Dorsolateral prefrontal cortex (tissue), 120 donors: ENCODE measurements at regions of chr19 and their contacts with region 1.

Region 1: DNA sequence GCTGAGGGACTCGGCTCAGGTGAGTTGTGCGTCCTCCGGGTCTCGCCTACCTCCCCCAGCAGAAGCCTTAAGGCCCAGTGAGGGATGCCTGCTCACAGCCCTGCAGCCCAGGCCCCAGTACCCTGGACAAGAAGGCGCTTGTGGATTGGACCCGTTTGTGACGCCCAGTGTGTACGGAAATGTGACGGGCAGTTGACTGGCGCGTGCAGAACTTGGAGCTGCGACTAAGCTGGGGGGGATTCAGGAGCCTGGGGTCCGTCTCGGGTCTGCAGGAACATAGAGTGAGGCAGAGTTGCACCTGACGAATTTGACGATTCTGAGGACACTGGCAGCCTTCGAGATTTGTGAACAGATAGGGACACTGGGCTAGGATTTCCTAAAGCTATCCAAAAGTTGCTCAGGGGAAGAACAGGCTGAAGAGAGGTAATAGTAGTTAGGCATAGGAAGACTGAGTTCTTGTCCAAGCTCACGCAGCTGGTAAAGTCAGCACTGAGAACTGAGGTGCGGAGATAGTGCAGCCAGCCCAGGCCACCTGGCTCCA is 519 bp downstream of the ZNF551 start:
- DNase-seq: no peak
- H3K4me3 ChIP-seq: peak overlapping the region; percentile 71 to 100 (median 91)
- H3K27ac ChIP-seq: peak overlapping the region in 5 of 59 donors; percentile 1 to 64 (median 35)
- H3K27me3 ChIP-seq: peaks cover 0 to under 1% (median 0%) of the 10 kb centered on the region in 45 donors
- CTCF ChIP-seq: no peak

Region 2: DNA sequence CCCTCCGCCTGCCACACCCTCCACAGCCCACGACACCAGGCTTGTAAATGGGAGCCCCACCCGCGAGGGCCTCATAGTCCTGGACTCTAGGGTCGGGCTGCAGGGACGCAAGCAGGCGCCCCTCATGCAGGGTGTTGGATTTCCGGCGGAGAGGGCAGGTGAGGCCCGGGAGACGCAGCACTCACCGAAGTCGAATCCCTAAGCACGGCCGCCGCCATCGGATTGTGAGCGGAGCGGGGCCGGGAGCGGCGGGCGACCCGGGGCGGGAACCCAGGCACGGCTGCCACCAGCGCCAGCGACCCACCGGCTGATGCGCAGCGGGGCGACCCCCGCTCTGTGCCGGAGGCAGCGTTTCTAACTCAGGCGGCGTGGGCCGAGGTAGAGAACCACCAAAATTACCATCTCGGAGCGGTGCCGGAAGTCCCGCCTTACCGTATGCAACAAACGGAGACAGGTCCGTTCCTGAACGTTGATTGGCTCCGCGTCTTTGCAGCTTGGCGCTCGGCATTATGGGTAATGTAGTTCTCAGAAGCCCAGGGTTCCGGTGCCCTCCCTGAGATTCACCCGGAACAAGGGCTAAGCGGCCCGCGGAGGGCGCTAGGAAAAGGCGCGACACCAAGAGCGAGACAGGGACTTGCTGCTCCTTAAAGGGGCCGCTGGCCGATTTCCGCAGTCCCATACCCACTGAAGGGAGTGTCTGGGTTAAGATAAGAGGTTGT is 103.7 kb before region 1 on chr19 and contains the start of gene ZNF416:
- intact Hi-C with region 1: loop called (anchors 5 to 10 kb)
- DNase-seq: peak; percentile 96 to 99 (median 98)
- H3K4me3 ChIP-seq: peak within 1 kb of the TSS; percentile 68 to 100 (median 97)
- H3K27ac ChIP-seq: peak within 1 kb of the TSS in 52 of 59 donors; percentile 14 to 87 (median 68)
- H3K27me3 ChIP-seq: no peaks in the 10 kb centered on the region
- CTCF ChIP-seq: peak in 53 of 56 donors; percentile 20 to 71 (median 46)
- total RNA-seq, gene ZNF416: 4.4 to 10.6 (median 7.8) TPM

Region 3: GRCh38 chr19:57583521-57584416 is 98.5 kb before region 1 on chr19 and contains the start of gene ZIK1:
- intact Hi-C with region 1: loop called (anchors 5 to 10 kb)
- DNase-seq: peak; percentile 90 to 98 (median 96)
- H3K4me3 ChIP-seq: peak within 1 kb of the TSS; percentile 59 to 94 (median 82)
- H3K27ac ChIP-seq: peak within 1 kb of the TSS in 48 of 59 donors; percentile 21 to 93 (median 75)
- H3K27me3 ChIP-seq: no peaks in the 10 kb centered on the region
- CTCF ChIP-seq: peak in 53 of 56 donors; percentile 3 to 65 (median 45)
- total RNA-seq, gene ZIK1: 3.1 to 9.5 (median 6.6) TPM

Region 4: DNA sequence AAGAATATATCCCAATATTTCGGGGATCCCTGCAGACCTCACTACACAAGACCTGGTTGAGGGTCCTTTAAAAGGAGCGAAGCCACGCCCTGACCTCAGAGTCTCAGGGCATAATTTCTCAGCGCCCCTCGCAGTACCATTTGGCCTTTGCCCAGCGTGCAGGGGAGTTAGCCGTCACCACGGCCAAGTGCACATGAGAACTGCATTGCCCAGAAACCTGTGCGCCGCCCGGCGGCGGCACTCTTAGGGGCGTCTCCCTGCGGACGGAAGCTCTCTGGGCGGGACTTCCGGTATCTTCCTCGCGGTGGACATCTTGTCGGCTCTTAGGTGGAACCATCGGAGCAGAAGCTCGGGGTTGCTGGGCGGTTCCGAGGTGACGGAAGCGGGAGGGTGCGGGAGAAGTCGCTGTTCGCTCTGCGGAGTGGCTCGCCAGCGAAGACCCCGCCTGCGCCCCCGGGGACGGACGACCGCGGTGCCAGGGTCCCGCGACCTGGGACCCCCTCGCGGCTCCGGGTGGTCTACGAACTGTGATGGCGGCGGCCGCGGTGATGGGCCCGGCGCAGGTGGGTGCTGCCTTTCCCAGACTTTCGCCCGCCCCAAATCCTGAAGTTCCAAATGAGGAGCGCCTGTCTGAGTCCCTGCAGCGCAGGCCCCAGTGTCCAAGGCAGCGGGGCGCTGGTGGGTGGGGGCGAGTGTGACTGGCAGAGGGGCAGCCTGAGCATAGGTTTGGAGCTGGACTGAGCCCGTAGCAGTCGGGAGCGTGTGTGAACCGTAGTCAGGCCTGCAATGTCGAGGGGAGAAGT is 68.2 kb before region 1 on chr19 and contains the start of gene ZNF134:
- intact Hi-C with region 1: loop called in 1 of 2 experiments (anchors 5 kb)
- DNase-seq: peak; percentile 82 to 95 (median 92)
- H3K4me3 ChIP-seq: peak within 1 kb of the TSS; percentile 66 to 100 (median 97)
- H3K27ac ChIP-seq: peak within 1 kb of the TSS in 37 of 59 donors; percentile 3 to 83 (median 60)
- H3K27me3 ChIP-seq: no peaks in the 10 kb centered on the region
- CTCF ChIP-seq: peak in 53 of 56 donors; percentile 21 to 78 (median 52)
- total RNA-seq, gene ZNF134: 15.1 to 32.3 (median 22.0) TPM

Region 5: GRCh38 chr19:57632987-57633831 is 49.1 kb before region 1 on chr19 and contains the start of gene ZNF211:
- intact Hi-C with region 1: loop called in 1 of 2 experiments (anchors 5 kb)
- DNase-seq: peak; percentile 90 to 96 (median 94)
- H3K4me3 ChIP-seq: peak within 1 kb of the TSS; percentile 68 to 99 (median 90)
- H3K27ac ChIP-seq: peak within 1 kb of the TSS in 57 of 59 donors; percentile 33 to 92 (median 80)
- H3K27me3 ChIP-seq: no peaks in the 10 kb centered on the region
- CTCF ChIP-seq: peak in 46 of 56 donors; percentile 7 to 63 (median 40)
- total RNA-seq, gene ZNF211: 14.6 to 37.0 (median 23.5) TPM

Region 6: GRCh38 chr19:57746580-57747471 is 64.5 kb after region 1 on chr19 and contains the start of gene ZNF776:
- intact Hi-C with region 1: loop called in 1 of 2 experiments (anchors 5 kb)
- DNase-seq: peak; percentile 62 to 94 (median 84)
- H3K4me3 ChIP-seq: peak within 1 kb of the TSS; percentile 65 to 100 (median 95)
- H3K27ac ChIP-seq: peak within 1 kb of the TSS in 57 of 59 donors; percentile 3 to 92 (median 82)
- H3K27me3 ChIP-seq: no peaks in the 10 kb centered on the region
- CTCF ChIP-seq: peak in 31 of 56 donors; percentile 11 to 49 (median 32)
- total RNA-seq, gene ZNF776: 16.1 to 36.3 (median 24.7) TPM

Region 7: DNA sequence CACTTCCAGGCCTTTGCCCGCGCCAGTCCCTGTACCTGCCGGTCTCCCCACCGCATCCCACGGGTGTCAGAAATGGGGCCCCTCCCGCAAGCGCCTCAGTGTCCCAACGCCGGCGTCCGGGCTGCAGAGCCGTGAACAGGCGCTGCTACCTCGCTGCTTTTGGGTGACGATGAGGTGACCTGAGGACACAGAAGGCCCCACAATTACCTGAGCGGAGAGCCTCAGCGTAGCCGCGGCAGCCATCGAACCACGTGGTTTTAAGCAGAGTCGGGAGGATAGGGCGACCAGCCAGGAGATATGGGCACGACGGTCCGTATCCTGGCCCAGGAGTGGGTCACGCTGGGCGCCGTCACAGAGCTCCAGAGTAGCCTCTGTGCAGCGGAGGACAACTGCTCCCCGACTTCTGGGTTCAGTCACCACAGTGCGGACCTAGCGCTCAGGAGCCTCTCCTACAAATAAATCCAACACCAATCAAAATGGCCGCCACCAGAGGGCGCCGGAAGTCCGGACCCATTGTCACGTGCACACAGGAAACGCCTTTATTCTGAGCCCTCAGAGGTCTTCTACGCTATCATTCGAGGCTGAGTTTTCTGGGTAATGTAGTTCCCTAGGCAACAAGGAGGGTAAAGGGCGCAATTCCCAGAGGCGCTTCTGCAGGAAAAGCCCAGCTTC is 206.4 kb after region 1 on chr19 and contains the start of gene ZNF814:
- intact Hi-C with region 1: no loop called
- DNase-seq: peak; percentile 69 to 95 (median 87)
- H3K4me3 ChIP-seq: peak within 1 kb of the TSS; percentile 53 to 93 (median 76)
- H3K27ac ChIP-seq: peak within 1 kb of the TSS in 36 of 59 donors; percentile 1 to 84 (median 54)
- H3K27me3 ChIP-seq: no peaks in the 10 kb centered on the region
- CTCF ChIP-seq: peak in 55 of 56 donors; percentile 34 to 78 (median 65)
- total RNA-seq, gene ZNF814: 18.3 to 51.9 (median 31.5) TPM